Activated B cell treated with CpG ODN at 0.5 μM for 24 hours (primary cell): ENCODE measurements at regions of chr6 and their contacts with region 1.

Region 1: GRCh38 chr6:52284460-52285176 is at the start of gene MCM3:
- DNase-seq: peak; percentile 83
- ATAC-seq: peak; percentile 98
- H3K4me3 Mint-ChIP-seq: peak within 1 kb of the TSS; percentile 58
- H3K27ac Mint-ChIP-seq: no peak within 1 kb of the TSS
- H3K4me1 Mint-ChIP-seq: peaks cover 20% of the 10 kb centered on the region
- H3K27me3 Mint-ChIP-seq: no peaks in the 10 kb centered on the region
- CTCF ChIP-seq: no peak
- total RNA-seq, gene MCM3: 73.2 and 78.9 TPM in 2 replicates

Region 2: GRCh38 chr6:52162940-52163908 is 121.4 kb before region 1 on chr6:
- CTCF ChIA-PET with region 1: no interaction called
- POLR2A ChIA-PET with region 1: no interaction called
- intact Hi-C with region 1: no loop called
- DNase-seq: no peak
- ATAC-seq: peak; percentile 34
- H3K4me3 Mint-ChIP-seq: no peak overlapping the region
- H3K27ac Mint-ChIP-seq: no peak overlapping the region
- H3K4me1 Mint-ChIP-seq: no peaks in the 10 kb centered on the region
- H3K27me3 Mint-ChIP-seq: peaks cover 12% of the 10 kb centered on the region
- CTCF ChIP-seq: no peak

Region 3: GRCh38 chr6:52243282-52243893 is 41.2 kb before region 1 on chr6:
- CTCF ChIA-PET with region 1: no interaction called
- POLR2A ChIA-PET with region 1: no interaction called
- intact Hi-C with region 1: no loop called
- DNase-seq: no peak
- ATAC-seq: no peak
- H3K4me3 Mint-ChIP-seq: no peak overlapping the region
- H3K27ac Mint-ChIP-seq: no peak overlapping the region
- H3K4me1 Mint-ChIP-seq: no peaks in the 10 kb centered on the region
- H3K27me3 Mint-ChIP-seq: peaks cover 5% of the 10 kb centered on the region
- CTCF ChIP-seq: no peak

Region 4: GRCh38 chr6:52304983-52305390 is 20.4 kb after region 1 on chr6:
- CTCF ChIA-PET with region 1: interaction called, 18 read pairs
- POLR2A ChIA-PET with region 1: interaction called, 21 read pairs
- intact Hi-C with region 1: loop called (anchors 1 kb)
- DNase-seq: no peak
- ATAC-seq: peak; percentile 65
- H3K4me3 Mint-ChIP-seq: peak overlapping the region; percentile 67
- H3K27ac Mint-ChIP-seq: peak overlapping the region; percentile 95
- H3K4me1 Mint-ChIP-seq: peaks cover 68% of the 10 kb centered on the region
- H3K27me3 Mint-ChIP-seq: no peaks in the 10 kb centered on the region
- CTCF ChIP-seq: no peak

Region 5: GRCh38 chr6:52361945-52362442 is 77.4 kb after region 1 on chr6 and contains the start of gene PAQR8:
- CTCF ChIA-PET with region 1: interaction called, 57 read pairs
- POLR2A ChIA-PET with region 1: interaction called, 29 read pairs
- intact Hi-C with region 1: loop called (anchors 1 kb)
- DNase-seq: peak; percentile 86
- ATAC-seq: peak; percentile 93
- H3K4me3 Mint-ChIP-seq: peak within 1 kb of the TSS; percentile 97
- H3K27ac Mint-ChIP-seq: peak within 1 kb of the TSS; percentile 86
- H3K4me1 Mint-ChIP-seq: peaks cover 25% of the 10 kb centered on the region
- H3K27me3 Mint-ChIP-seq: no peaks in the 10 kb centered on the region
- CTCF ChIP-seq: no peak
- total RNA-seq, gene PAQR8: 6.8 and 8.0 TPM in 2 replicates

Region 6: DNA sequence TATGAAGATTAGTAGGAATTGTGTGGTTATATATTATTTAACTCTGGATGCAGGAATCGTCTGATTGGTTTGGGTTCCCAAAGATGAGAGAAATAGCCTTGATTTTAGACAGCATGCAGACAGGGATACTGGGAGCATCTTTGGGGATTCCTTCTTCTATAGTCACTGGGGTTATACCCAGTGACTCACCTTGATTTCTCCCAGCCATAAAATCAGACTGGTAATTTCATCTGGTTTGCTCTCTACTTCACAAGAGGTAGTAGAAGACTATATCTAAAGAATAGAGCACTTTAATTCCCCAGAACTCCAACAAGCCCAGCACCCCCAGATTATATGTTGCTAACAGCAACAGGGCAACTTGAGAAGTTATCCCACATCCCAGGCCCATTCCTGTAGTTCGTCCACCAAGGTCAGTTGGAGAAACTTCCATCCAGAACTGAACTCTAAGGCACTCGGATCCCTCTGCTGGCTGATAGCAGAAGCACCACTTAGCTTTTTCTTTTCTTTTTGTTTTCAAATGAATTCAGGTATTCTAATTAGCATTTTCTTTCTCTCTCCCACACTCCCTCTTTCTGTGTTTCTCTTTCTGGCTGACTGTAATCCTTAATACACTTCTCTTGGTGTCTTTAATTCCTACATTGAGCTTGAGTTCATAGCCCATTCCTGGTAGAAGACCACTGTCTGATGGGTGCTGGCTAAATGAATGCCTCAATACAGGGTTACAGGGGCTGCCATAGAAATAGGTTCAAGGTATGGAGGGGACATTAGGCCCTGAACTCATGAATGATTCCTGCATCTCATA is 115.1 kb after region 1 on chr6:
- CTCF ChIA-PET with region 1: interaction called, 156 read pairs
- POLR2A ChIA-PET with region 1: interaction called, 7 read pairs
- intact Hi-C with region 1: loop called (anchors 1 kb)
- DNase-seq: no peak
- ATAC-seq: peak; percentile 61
- H3K4me3 Mint-ChIP-seq: no peak overlapping the region
- H3K27ac Mint-ChIP-seq: no peak overlapping the region
- H3K4me1 Mint-ChIP-seq: peaks cover 33% of the 10 kb centered on the region
- H3K27me3 Mint-ChIP-seq: no peaks in the 10 kb centered on the region
- CTCF ChIP-seq: no peak

Region 7: GRCh38 chr6:52546678-52547077 is 262.1 kb after region 1 on chr6:
- CTCF ChIA-PET with region 1: no interaction called
- POLR2A ChIA-PET with region 1: no interaction called
- intact Hi-C with region 1: no loop called
- DNase-seq: no peak
- ATAC-seq: peak; percentile 84
- H3K4me3 Mint-ChIP-seq: peak overlapping the region; percentile 29
- H3K27ac Mint-ChIP-seq: peak overlapping the region; percentile 68
- H3K4me1 Mint-ChIP-seq: peaks cover 36% of the 10 kb centered on the region
- H3K27me3 Mint-ChIP-seq: no peaks in the 10 kb centered on the region
- CTCF ChIP-seq: no peak

Region 8: DNA sequence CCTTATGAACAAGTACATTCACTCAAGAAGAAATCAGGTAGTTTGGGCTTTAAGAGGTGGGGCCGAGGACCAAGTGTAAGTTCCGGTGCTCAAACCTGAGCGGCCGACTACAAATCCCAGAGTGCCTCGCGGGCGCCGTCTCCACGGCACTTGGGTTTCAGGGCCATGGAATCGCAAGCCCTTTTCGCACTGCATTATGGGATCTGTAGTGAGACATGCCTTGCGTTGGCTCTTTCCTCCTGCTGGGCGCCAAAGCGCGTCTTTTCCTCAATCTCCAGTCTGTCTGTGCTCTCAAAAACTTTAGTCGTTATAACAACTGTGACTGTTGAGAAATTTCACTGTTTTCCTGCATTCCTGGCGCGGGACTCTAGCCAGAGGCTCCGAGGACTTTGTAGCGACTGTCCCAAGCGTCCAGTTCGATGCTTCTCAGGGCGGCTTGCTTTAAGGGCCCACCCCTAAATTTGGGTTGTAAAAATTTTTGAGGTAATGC is 780.2 kb after region 1 on chr6:
- CTCF ChIA-PET with region 1: no interaction called
- POLR2A ChIA-PET with region 1: no interaction called
- intact Hi-C with region 1: loop called (anchors 1 kb)
- DNase-seq: peak; percentile 82
- ATAC-seq: peak; percentile 81
- H3K4me3 Mint-ChIP-seq: peak overlapping the region; percentile 100
- H3K27ac Mint-ChIP-seq: peak overlapping the region; percentile 99
- H3K4me1 Mint-ChIP-seq: peaks cover 57% of the 10 kb centered on the region
- H3K27me3 Mint-ChIP-seq: no peaks in the 10 kb centered on the region
- CTCF ChIP-seq: no peak